Activated CD8-positive, alpha-beta memory T cell treated with anti-CD3 and anti-CD28 coated beads, Interleukin-2, amount 10 ng/mL, durations not matched to agents 7 days and 5 days (primary cell): ENCODE measurements at regions of chr3 and their contacts with region 1.

Region 1: DNA sequence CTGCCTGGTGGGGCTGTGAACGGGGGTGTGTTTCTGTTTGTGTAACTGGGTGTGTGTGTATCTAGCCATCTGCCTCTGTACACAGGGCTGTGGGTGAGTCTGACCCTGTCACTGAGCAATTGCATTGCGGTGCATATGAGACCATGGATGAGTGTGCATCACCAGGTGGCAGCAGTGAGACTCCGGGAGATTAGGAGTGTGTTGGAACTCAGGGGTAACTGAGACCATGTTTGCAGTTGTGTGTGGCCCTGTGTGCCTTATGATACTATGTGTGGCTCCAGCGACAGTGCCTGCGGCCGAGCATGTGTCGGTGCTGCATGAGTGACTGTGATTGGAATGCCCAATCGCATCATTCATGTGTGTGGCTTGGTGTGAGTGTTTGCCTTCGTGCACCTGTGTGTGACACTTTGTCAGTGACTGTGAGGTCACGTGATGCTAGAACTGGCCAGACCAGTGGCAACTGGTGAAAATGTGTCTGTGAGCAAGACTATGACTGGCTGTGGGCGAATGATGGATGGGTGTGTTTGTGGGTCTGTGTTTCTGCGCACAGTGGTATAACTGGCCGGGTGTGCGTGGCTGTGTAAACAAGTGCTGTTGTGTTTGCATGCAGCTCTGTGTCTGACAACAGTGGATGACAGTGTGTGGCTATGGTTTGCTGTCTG is 14.0 kb downstream of the VILL start:
- DNase-seq: peak; percentile 79
- ATAC-seq: peak; percentile 75
- H3K4me3 Mint-ChIP-seq: no peak overlapping the region
- H3K27ac Mint-ChIP-seq: peak overlapping the region; percentile 37
- H3K4me1 Mint-ChIP-seq: peaks cover 15% of the 10 kb centered on the region
- H3K27me3 Mint-ChIP-seq: no peaks in the 10 kb centered on the region

Region 2: DNA sequence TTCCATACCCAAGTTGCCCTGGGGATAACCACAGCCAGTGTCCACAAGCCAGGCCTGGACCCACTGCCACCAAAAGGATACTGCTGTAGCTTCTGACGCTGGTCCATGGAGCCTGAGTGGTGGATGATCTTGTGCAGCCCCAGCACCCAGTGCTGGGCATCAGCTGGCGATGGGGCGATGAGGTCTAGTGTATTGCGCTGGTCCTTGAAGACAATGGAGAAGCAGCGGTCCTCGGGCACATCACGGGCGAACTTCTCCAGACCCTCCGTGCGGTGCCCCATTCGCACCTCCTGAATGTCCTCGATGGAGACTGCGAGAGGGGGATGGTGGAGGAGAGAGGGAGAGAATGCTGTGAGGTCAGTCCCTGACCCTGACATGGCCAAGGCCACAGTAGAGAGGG is 11.9 kb after region 1 on chr3:
- CTCF ChIA-PET with region 1: interaction called, 15 read pairs
- DNase-seq: no peak
- ATAC-seq: no peak
- H3K4me3 Mint-ChIP-seq: no peak overlapping the region
- H3K27ac Mint-ChIP-seq: no peak overlapping the region
- H3K4me1 Mint-ChIP-seq: no peaks in the 10 kb centered on the region
- H3K27me3 Mint-ChIP-seq: no peaks in the 10 kb centered on the region

Region 3: GRCh38 chr3:38032328-38032865 is 27.9 kb after region 1 on chr3:
- CTCF ChIA-PET with region 1: interaction called, 10 read pairs
- DNase-seq: no peak
- ATAC-seq: no peak
- H3K4me3 Mint-ChIP-seq: no peak overlapping the region
- H3K27ac Mint-ChIP-seq: no peak overlapping the region
- H3K4me1 Mint-ChIP-seq: peaks cover 18% of the 10 kb centered on the region
- H3K27me3 Mint-ChIP-seq: peaks cover 15% of the 10 kb centered on the region

Region 4: GRCh38 chr3:38039101-38039898 is 34.8 kb after region 1 on chr3 and contains the start of gene DLEC1:
- CTCF ChIA-PET with region 1: interaction called, 17 read pairs
- DNase-seq: peak; percentile 97
- ATAC-seq: peak; percentile 79
- H3K4me3 Mint-ChIP-seq: peak within 1 kb of the TSS; percentile 55
- H3K27ac Mint-ChIP-seq: peak within 1 kb of the TSS; percentile 95
- H3K4me1 Mint-ChIP-seq: peaks cover 30% of the 10 kb centered on the region
- H3K27me3 Mint-ChIP-seq: peaks cover 2% of the 10 kb centered on the region
- total RNA-seq, gene DLEC1: 0.26 to 1.1 TPM